Body of pancreas (tissue), 4 donors: ENCODE measurements at regions of chr2 and their contacts with region 1.

Region 1: DNA sequence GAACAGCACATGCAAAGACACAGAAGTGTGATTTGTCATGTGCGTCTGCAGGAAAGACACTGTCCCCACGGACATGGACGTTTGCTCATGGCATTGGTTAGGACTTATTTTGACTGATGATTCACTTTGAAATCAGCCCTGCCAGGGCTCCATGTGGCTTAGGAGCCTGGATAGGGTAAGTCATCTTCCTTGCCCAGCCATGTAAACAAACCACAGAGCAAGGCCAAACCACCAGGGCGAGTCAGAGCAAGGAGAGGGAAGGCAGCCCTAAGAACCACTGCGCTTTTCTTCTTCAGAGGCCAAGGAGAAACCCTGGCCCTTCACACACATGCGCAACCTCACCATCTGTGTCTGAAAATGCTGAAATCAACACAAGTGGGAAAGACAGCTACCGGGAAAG is 88.8 kb downstream of the GFPT1 start:
- DNase-seq: no peak
- ATAC-seq: no peak
- H3K4me3 ChIP-seq: no peak overlapping the region
- H3K27ac ChIP-seq: no peak overlapping the region
- H3K4me1 ChIP-seq: no peaks in the 10 kb centered on the region
- H3K27me3 ChIP-seq: no peaks in the 10 kb centered on the region
- CTCF ChIP-seq: no peak
- POLR2A ChIP-seq: no peak

Region 2: DNA sequence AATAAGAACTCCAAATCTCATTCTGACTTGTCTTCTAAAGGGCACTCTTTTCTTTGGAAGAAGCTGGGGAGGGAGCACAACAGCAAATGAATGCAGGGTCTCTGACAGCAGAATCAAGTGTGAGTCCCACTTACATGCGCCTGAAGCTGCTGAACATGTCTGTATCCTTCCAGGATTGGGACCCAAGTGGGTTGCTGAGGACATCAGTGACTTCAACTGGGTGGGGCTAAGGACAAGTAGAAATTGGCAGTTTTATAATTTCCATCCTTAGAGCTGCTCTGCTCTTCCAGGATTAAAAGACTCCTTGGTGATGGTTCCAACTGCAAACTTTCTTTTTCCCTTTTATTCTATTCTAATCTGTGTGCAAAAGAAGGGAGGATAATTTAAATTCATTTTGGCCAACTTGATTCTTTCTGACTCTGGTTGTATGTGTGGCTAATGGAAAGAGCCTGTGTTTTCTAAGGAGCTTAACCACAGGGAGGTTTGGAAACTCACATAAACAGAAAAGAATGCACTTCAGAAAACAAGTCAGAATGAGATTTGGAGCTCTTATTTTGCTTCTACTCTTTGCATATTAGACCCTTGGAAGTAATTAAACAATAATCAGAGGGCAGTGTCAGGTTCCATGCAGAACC is 264.7 kb before region 1 on chr2:
- intact Hi-C with region 1: loop called (anchors 5 kb)
- DNase-seq: no peak
- ATAC-seq: no peak
- H3K4me3 ChIP-seq: no peak overlapping the region
- H3K27ac ChIP-seq: no peak overlapping the region
- H3K4me1 ChIP-seq: no peaks in the 10 kb centered on the region
- H3K27me3 ChIP-seq: no peaks in the 10 kb centered on the region
- CTCF ChIP-seq: no peak
- POLR2A ChIP-seq: no peak

Region 3: DNA sequence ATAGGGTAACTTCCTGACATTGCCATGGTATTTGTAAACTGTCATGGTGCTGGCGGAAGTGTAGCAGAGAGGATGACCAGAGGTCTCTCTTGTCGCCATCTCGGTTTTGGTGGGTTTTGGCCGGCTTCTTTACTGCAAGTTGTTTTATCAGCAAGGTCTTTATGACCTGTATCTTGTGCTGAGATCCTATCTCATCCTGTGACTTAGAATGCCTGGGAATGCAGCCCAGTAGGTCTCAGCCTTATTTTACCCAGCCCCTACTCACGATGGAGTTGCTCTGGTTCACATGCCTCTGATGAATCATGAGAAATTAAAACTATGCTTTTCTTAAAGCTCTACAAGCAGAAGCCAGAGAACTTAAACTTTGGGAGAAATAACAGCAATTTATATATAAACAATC is 151.6 kb after region 1 on chr2:
- intact Hi-C with region 1: no loop called
- DNase-seq: no peak
- ATAC-seq: no peak
- H3K4me3 ChIP-seq: no peak overlapping the region
- H3K27ac ChIP-seq: no peak overlapping the region
- H3K4me1 ChIP-seq: no peaks in the 10 kb centered on the region
- H3K27me3 ChIP-seq: no peaks in the 10 kb centered on the region
- CTCF ChIP-seq: no peak
- POLR2A ChIP-seq: no peak